Activated CD8-positive, alpha-beta T cell treated with anti-CD3 and anti-CD28 coated beads, Interleukin-2, amount 10 ng/mL, durations not matched to agents 7 days and 5 days (primary cell): ENCODE measurements at regions of chr16 and their contacts with region 1.

Region 1: GRCh38 chr16:71808593-71809459 is at the start of gene AP1G1:
- DNase-seq: peak; percentile 96
- ATAC-seq: peak; percentile 95
- H3K4me3 Mint-ChIP-seq: peak within 1 kb of the TSS; percentile 90
- H3K27ac Mint-ChIP-seq: peak within 1 kb of the TSS; percentile 100
- H3K4me1 Mint-ChIP-seq: peaks cover 25% of the 10 kb centered on the region
- H3K27me3 Mint-ChIP-seq: no peaks in the 10 kb centered on the region
- total RNA-seq, gene AP1G1: 74.9 to 77.4 TPM

Region 2: DNA sequence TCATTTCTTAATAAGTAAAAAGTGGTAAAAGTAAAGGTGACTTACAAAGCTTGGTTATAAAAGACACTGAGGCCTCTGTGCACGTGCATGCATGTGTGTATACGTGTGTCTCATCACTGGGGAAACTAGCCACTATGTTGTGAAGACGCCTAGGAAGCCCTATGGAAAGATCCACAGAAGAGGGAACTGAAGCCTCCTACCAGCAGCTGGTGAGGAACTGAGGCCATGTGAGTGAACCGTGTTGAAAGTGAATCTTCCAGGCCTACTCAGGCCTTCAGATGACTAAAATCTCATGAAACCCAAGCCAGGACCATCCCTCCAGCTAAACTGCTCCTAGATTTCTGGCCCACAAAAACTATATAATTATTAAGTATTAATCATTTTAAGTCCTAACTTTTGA is 108.0 kb before region 1 on chr16:
- CTCF ChIA-PET with region 1: no interaction called
- POLR2A ChIA-PET with region 1: no interaction called
- DNase-seq: no peak
- ATAC-seq: no peak
- H3K4me3 Mint-ChIP-seq: no peak overlapping the region
- H3K27ac Mint-ChIP-seq: no peak overlapping the region
- H3K4me1 Mint-ChIP-seq: peaks cover 4% of the 10 kb centered on the region
- H3K27me3 Mint-ChIP-seq: no peaks in the 10 kb centered on the region

Region 3: GRCh38 chr16:71771571-71771970 is 37.3 kb before region 1 on chr16:
- CTCF ChIA-PET with region 1: no interaction called
- POLR2A ChIA-PET with region 1: no interaction called
- DNase-seq: no peak
- ATAC-seq: no peak
- H3K4me3 Mint-ChIP-seq: no peak overlapping the region
- H3K27ac Mint-ChIP-seq: no peak overlapping the region
- H3K4me1 Mint-ChIP-seq: peaks cover 21% of the 10 kb centered on the region
- H3K27me3 Mint-ChIP-seq: no peaks in the 10 kb centered on the region

Region 4: GRCh38 chr16:71845639-71846430 is 37.0 kb after region 1 on chr16 and contains the start of gene ATXN1L:
- CTCF ChIA-PET with region 1: interaction called, 3 read pairs
- POLR2A ChIA-PET with region 1: interaction called, 39 read pairs
- DNase-seq: peak; percentile 93
- ATAC-seq: peak; percentile 97
- H3K4me3 Mint-ChIP-seq: peak within 1 kb of the TSS; percentile 90
- H3K27ac Mint-ChIP-seq: peak within 1 kb of the TSS; percentile 94
- H3K4me1 Mint-ChIP-seq: peaks cover 36% of the 10 kb centered on the region
- H3K27me3 Mint-ChIP-seq: no peaks in the 10 kb centered on the region
- total RNA-seq, gene ATXN1L: 20.3 to 22.6 TPM

Region 5: DNA sequence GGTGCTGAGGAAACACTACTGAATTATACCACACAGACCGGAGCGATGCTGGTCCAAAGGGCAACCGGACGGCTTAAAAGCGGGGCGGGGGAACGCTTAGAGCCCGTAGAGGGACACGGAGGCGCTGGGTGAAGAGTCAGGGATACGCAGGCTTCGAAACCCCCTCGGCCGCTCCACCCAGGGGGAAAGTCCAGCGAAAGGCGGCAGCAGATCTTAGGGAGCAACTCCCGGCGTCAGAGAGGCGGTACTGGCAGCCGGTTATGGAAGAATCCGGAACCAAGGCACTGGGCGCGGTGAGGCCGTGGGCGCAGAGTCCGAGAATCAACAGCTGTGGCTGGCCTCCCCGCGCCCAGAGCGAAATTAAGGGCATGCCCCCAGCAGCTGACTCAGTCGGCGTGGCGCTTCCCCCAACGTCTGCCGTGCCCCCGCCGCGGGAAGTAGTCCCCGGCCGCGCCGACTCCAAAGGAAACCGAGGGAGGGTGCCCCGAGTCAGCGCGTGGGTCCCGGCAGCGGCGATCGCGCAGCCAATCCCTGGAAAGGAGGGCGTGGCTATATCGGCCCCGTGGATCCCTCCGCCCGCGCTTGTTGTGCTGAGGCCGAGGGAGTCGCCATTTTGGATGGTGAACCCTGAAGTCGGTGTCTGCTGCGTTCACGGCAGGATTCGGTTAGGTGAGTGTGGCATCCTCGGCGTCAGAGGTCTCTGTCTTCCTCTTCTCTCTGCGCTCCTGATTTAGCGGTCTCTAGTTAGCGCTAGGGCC is 86.3 kb after region 1 on chr16 and contains the start of gene IST1:
- CTCF ChIA-PET with region 1: interaction called, 5 read pairs
- POLR2A ChIA-PET with region 1: interaction called, 28 read pairs
- DNase-seq: peak; percentile 99
- ATAC-seq: peak; percentile 95
- H3K4me3 Mint-ChIP-seq: peak within 1 kb of the TSS; percentile 97
- H3K27ac Mint-ChIP-seq: peak within 1 kb of the TSS; percentile 97
- H3K4me1 Mint-ChIP-seq: peaks cover 24% of the 10 kb centered on the region
- H3K27me3 Mint-ChIP-seq: no peaks in the 10 kb centered on the region
- total RNA-seq, gene IST1: 155 to 174 TPM

Region 6: DNA sequence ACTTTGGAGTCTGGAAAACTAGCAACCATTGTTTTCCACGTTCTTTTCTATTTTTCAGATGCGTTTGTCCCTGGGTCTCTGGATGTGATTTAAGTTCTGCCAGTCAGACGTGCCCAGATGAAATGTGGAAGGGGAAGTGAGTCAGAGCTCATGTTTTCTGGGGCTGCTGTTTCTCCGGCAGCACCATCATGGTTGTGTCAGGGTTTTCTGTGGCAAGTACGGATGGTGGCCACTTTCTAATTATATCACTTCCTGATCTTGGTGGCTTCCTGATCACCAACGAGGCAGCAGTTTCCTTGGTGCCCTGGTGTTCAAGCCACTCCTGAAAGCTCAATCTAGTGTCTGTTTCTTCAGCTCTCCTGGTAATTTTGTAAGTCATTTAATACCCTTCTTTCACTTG is 394.6 kb after region 1 on chr16:
- CTCF ChIA-PET with region 1: no interaction called
- POLR2A ChIA-PET with region 1: no interaction called
- DNase-seq: peak; percentile 71
- ATAC-seq: peak; percentile 88
- H3K4me3 Mint-ChIP-seq: peak overlapping the region; percentile 68
- H3K27ac Mint-ChIP-seq: peak overlapping the region; percentile 87
- H3K4me1 Mint-ChIP-seq: peaks cover 39% of the 10 kb centered on the region
- H3K27me3 Mint-ChIP-seq: peaks cover 8% of the 10 kb centered on the region